HEK293 (cell line): ENCODE measurements at regions of chr1 and their contacts with region 1.

Region 1: GRCh38 chr1:119675349-119676345 is 27.6 kb upstream of the ZNF697 start:
- H3K4me3 ChIP-seq: peak overlapping the region; percentile 34
- H3K27ac ChIP-seq: no peak overlapping the region
- H3K4me1 ChIP-seq: no peaks in the 10 kb centered on the region; the same call in 1 of the 2 replicates
- CTCF ChIP-seq: peak; percentile 71

Region 2: GRCh38 chr1:119613769-119614720 is 61.6 kb before region 1 on chr1:
- CTCF ChIA-PET with region 1: interaction called, 136 read pairs
- POLR2A ChIA-PET with region 1: interaction called, 4 read pairs
- H3K4me3 ChIP-seq: no peak overlapping the region
- H3K27ac ChIP-seq: no peak overlapping the region
- H3K4me1 ChIP-seq: no peaks in the 10 kb centered on the region
- CTCF ChIP-seq: peak; percentile 91

Region 3: DNA sequence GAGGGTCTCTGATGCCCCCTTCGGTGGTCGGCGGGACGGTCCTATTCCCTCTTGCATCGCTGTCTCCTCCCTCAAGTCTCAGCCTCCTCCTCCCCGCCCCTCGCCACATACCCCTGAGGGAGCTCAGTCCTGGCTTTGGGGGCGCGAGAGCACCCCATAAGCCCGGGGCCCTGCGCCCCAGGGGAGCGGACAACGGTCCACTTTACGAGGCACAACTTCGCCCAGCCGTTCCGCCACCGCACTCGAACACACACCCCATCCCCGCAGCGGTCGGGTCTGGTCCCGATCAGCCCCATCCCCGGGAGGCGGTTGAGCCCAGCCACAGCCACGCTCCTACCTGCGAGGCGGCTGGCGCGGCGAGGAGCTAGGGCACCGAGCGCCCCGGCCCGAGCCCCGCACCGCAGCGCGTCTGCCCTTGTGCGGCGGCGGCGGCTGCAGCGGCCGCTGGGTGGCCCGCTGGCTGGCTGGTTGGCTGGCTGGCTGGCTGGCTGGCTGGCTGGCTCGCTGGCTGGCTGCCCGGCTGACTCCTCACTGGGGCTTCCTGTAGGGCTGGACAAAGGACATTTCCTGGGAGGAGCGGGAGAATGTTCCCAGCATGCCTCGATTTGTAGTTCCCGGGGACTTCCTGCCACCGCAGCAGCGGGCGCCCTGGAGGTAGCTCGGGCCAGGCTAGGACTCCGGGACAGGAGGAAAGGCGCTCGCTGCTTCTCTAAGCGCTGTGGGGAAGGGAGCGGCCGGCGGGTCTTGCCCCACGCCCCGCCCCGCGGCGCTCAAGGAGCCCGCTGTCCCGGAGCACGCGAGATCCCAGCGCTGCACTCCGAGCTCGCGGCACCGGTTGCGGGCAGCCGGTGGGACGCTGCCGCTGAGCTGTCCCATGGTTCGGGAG is 27.7 kb before region 1 on chr1 and contains the start of gene ZNF697:
- CTCF ChIA-PET with region 1: interaction called, 59 read pairs
- POLR2A ChIA-PET with region 1: interaction called, 5 read pairs
- H3K4me3 ChIP-seq: peak within 1 kb of the TSS; percentile 89
- H3K27ac ChIP-seq: peak within 1 kb of the TSS; percentile 90
- H3K4me1 ChIP-seq: no peaks in the 10 kb centered on the region
- CTCF ChIP-seq: peak; percentile 92

Region 4: GRCh38 chr1:119662034-119662437 is 13.6 kb before region 1 on chr1:
- CTCF ChIA-PET with region 1: interaction called, 45 read pairs
- POLR2A ChIA-PET with region 1: no interaction called
- H3K4me3 ChIP-seq: no peak overlapping the region
- H3K27ac ChIP-seq: no peak overlapping the region
- H3K4me1 ChIP-seq: no peaks in the 10 kb centered on the region
- CTCF ChIP-seq: no peak

Region 5: GRCh38 chr1:119697598-119697997 is 22.0 kb after region 1 on chr1:
- CTCF ChIA-PET with region 1: interaction called, 16 read pairs
- POLR2A ChIA-PET with region 1: no interaction called
- H3K4me3 ChIP-seq: no peak overlapping the region
- H3K27ac ChIP-seq: no peak overlapping the region
- H3K4me1 ChIP-seq: no peaks in the 10 kb centered on the region
- CTCF ChIP-seq: no peak